Psoas muscle (tissue), 8 donors: ENCODE measurements at regions of chr18 and their contacts with region 1.

Region 1: GRCh38 chr18:79484661-79485621 is 89.2 kb downstream of the NFATC1 start:
- DNase-seq: peak; percentile 49 to 50
- ATAC-seq: peak; percentile 30 to 43 (median 33)
- H3K4me3 ChIP-seq: peak overlapping the region; percentile 19
- H3K27ac ChIP-seq: peak overlapping the region; percentile 74
- H3K4me1 ChIP-seq: peaks cover 18% of the 10 kb centered on the region
- H3K27me3 ChIP-seq: no peaks in the 10 kb centered on the region
- CTCF ChIP-seq: no peak

Region 2: DNA sequence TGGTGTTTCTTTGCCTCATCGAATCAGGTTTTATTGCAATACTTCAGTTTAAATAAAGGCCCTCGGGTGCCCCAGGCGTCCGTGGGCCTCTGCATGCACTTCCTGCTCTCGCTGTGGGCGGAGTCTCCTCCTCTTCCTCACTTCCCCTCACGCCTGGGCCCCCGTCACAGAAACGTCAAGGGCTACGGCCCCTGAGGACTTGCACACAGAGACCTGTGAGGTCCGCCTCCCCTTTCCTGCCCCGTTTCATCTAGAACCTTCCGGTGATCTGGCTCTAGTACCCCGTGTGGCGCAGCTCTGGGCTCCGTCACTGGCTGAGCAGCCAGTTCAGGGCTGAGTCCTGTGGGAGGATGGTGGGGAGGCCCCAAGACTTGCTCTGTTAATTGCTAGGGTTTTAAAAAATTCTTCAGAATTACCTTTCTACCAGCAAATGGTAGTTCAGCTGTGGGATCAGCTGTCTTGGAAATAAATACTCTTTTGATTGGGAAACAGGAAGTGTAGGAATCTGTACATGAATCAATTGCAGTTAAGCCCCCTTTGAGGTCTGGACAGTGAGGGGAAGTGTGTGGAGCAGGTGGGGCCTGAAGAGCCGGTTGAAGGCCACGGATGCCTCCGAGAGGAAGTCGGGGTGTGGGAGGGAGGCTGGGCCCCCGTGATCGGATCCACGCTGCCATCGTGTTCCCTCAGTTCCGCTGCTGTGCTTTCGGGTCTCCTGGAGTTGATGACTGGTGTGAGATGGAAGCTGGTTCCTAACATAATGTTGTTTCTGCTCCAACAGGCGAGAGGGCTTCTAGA is 79.0 kb before region 1 on chr18:
- intact Hi-C with region 1: loop called in 1 of 2 experiments (anchors 1 kb)
- DNase-seq: peak in 1 of 2 donors; percentile 85
- ATAC-seq: no peak
- H3K4me3 ChIP-seq: peak overlapping the region; percentile 7
- H3K27ac ChIP-seq: peak overlapping the region; percentile 94
- H3K4me1 ChIP-seq: peaks cover 50% of the 10 kb centered on the region
- H3K27me3 ChIP-seq: no peaks in the 10 kb centered on the region
- CTCF ChIP-seq: no peak

Region 3: GRCh38 chr18:79447703-79448367 is 37.1 kb before region 1 on chr18:
- intact Hi-C with region 1: loop called in 1 of 2 experiments (anchors 5 kb)
- DNase-seq: no peak
- ATAC-seq: no peak
- H3K4me3 ChIP-seq: no peak overlapping the region
- H3K27ac ChIP-seq: no peak overlapping the region
- H3K4me1 ChIP-seq: peaks cover 16% of the 10 kb centered on the region
- H3K27me3 ChIP-seq: no peaks in the 10 kb centered on the region
- CTCF ChIP-seq: no peak

Region 4: GRCh38 chr18:79616651-79617518 is 131.9 kb after region 1 on chr18:
- intact Hi-C with region 1: no loop called
- DNase-seq: peak in 1 of 2 donors; percentile 50
- ATAC-seq: peak in 1 of 4 donors; percentile 25
- H3K4me3 ChIP-seq: peak overlapping the region; percentile 49
- H3K27ac ChIP-seq: no peak overlapping the region
- H3K4me1 ChIP-seq: no peaks in the 10 kb centered on the region
- H3K27me3 ChIP-seq: peaks cover 0 to 35% (median 8%) of the 10 kb centered on the region in 3 donors
- CTCF ChIP-seq: no peak

Region 5: GRCh38 chr18:79866889-79867574 is 382.1 kb after region 1 on chr18:
- intact Hi-C with region 1: no loop called
- DNase-seq: no peak
- ATAC-seq: no peak
- H3K4me3 ChIP-seq: no peak overlapping the region
- H3K27ac ChIP-seq: no peak overlapping the region
- H3K4me1 ChIP-seq: no peaks in the 10 kb centered on the region
- H3K27me3 ChIP-seq: peaks cover 0 to 25% (median 23%) of the 10 kb centered on the region in 3 donors
- CTCF ChIP-seq: no peak